Activated CD4-positive, alpha-beta T cell treated with anti-CD3 and anti-CD28 coated beads, Interleukin-2, amount 10 ng/mL, durations not matched to agents 24 days and 14 days (primary cell): ENCODE measurements at regions of chr2 and their contacts with region 1.

Region 1: GRCh38 chr2:72150157-72150865 is 2.6 kb upstream of the CYP26B1 start:
- DNase-seq: peak; percentile 89
- H3K4me3 Mint-ChIP-seq: peak overlapping the region; percentile 69
- H3K27ac Mint-ChIP-seq: peak overlapping the region; percentile 63
- H3K4me1 Mint-ChIP-seq: peaks cover 21% of the 10 kb centered on the region
- H3K27me3 Mint-ChIP-seq: peaks cover 48% of the 10 kb centered on the region

Region 2: DNA sequence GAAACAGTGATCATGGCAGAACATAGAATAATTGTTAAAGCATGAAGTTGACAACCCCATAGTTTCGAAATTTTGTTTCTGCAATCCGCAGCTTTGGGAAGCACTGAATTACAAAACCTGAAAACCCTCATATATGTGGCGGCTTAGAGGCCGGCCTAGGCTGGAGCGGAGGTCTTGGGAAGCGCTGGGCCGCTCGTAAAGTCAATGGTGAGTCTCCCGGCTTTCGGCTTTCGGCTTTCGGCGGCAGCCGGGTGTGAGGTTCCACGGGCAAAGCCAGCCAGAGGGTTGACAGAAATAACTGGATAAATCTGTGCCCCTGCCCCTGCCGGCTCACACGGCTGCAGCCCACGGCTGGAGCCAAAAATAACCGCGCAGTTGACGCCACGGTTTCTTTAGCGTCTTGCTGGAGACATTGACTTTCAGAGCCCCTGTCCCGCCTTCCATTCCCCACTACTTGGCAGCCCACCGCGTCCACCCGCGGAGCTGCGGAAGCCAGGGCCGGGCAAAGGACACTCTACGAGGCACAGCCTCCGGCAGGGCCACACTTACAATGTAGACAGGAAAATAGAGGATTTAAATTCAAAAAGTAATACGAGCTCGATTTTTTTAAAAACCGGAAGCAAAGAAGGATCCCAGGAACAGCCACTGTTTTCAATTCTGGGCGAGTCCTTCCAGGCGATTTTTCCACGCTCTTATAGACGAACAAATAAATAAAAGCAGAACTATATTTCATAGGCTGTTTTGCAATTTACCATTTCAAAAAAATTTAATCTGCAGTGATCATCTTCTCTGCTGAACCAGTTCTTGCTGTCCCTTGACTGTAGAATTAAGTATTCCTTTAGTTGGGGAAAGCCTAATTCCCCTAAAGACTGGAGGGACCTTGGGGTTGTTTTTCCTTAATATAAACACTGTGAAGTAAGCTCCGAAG is 1242.9 kb before region 1 on chr2:
- intact Hi-C with region 1: loop called (anchors 5 kb)
- DNase-seq: no peak
- H3K4me3 Mint-ChIP-seq: peak overlapping the region; percentile 49
- H3K27ac Mint-ChIP-seq: no peak overlapping the region
- H3K4me1 Mint-ChIP-seq: peaks cover 4% of the 10 kb centered on the region
- H3K27me3 Mint-ChIP-seq: peaks cover 77% of the 10 kb centered on the region

Region 3: GRCh38 chr2:71923887-71924533 is 226.3 kb before region 1 on chr2:
- intact Hi-C with region 1: loop called (anchors 1 kb)
- DNase-seq: peak; percentile 84
- H3K4me3 Mint-ChIP-seq: no peak overlapping the region
- H3K27ac Mint-ChIP-seq: no peak overlapping the region
- H3K4me1 Mint-ChIP-seq: no peaks in the 10 kb centered on the region
- H3K27me3 Mint-ChIP-seq: no peaks in the 10 kb centered on the region

Region 4: DNA sequence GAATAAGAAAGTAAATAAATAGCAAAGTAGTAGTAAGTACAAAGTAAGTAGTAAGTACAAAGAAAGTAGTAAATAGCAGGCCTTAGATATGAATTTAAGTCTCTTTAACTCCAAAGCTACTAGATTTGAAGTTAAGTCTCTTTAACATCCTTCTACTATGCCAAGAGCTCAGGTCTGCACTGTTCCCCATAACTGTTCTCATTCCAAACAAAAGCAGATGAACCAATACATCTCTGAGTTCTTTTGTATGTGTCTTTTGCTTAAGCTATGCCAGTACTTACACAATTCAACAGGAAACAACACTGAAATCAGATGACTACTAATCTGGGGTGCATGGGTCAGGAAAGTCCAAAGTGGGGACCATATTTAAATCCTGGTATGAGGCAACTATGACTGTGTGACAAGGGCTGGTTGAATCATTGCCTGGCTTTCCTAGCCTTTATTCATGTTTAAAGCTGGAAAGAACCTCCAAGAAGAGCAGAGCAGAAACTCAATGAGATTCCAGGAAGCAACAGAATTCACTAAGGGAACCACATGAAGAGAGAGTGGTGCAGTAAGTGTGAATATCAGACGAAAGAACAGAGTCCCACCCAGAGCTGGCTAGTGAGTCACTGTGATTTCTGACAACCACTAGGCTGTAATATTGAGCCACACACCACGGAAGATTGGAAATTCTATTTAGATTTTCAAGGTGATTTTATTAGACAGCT is 48.4 kb after region 1 on chr2:
- intact Hi-C with region 1: no loop called
- DNase-seq: no peak
- H3K4me3 Mint-ChIP-seq: no peak overlapping the region
- H3K27ac Mint-ChIP-seq: no peak overlapping the region
- H3K4me1 Mint-ChIP-seq: no peaks in the 10 kb centered on the region
- H3K27me3 Mint-ChIP-seq: no peaks in the 10 kb centered on the region

Region 5: DNA sequence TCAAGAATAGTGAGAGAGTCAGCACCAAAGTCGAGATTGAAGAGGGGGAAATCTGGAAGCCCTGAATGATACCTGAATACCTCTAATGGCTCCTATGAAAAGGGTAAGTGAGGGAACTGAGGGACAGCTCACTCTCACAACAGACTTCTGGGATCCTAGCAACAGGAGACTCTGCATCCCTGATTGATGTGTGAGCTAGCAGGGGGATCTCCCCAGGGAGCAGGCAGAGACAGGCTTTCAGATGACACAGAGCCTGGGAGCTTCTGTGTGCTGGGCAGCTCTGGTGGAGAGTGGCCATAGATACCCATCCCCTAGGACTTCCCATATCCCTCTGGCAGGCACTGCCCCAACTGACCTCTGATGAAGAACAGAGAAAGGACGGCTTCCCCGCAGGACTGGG is 469.3 kb after region 1 on chr2:
- intact Hi-C with region 1: no loop called
- DNase-seq: no peak
- H3K4me3 Mint-ChIP-seq: no peak overlapping the region
- H3K27ac Mint-ChIP-seq: no peak overlapping the region
- H3K4me1 Mint-ChIP-seq: no peaks in the 10 kb centered on the region
- H3K27me3 Mint-ChIP-seq: no peaks in the 10 kb centered on the region